ENCODE measurements at regions of chr11 and their contacts with region 1.

Region 1: GRCh38 chr11:83819933-83820549 is 533.9 kb upstream of the CCDC90B start:
- DNase-seq: peak; percentile 48
- H3K4me3 ChIP-seq: no peak overlapping the region
- H3K27ac ChIP-seq: no peak overlapping the region
- H3K4me1 ChIP-seq: no peaks in the 10 kb centered on the region
- H3K27me3 ChIP-seq: no peaks in the 10 kb centered on the region
- CTCF ChIP-seq: peak; percentile 52 to 60

Region 2: DNA sequence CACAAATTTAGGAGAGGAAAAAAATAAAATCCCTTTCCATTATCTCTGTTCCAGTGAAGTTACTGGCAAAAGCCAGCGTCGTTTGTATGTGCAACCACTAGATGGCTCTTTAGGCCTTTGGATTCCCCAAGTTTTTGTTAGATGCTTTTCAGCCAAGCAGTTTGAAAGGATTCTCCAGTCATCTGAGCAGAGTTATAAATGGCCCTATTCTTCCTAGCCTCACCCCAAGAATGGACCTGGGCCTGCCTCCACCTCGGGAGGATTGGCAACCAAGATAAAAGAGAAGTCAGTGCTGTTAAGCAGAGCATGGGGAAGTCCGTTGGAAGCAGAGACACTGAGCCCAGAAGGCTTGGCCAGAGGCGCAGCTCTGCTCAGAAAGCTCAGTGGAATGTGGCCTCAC is 1101.7 kb before region 1 on chr11:
- CTCF ChIA-PET with region 1: no interaction called
- dilution Hi-C with region 1: no loop called
- in situ Hi-C with region 1: loop called (anchors 25 kb)
- intact Hi-C with region 1: loop called (anchors 5 kb)
- DNase-seq: peak; percentile 54
- H3K4me3 ChIP-seq: no peak overlapping the region
- H3K27ac ChIP-seq: no peak overlapping the region
- H3K4me1 ChIP-seq: peaks cover 4% of the 10 kb centered on the region
- H3K27me3 ChIP-seq: no peaks in the 10 kb centered on the region
- CTCF ChIP-seq: peak; percentile 76 to 80

Region 3: DNA sequence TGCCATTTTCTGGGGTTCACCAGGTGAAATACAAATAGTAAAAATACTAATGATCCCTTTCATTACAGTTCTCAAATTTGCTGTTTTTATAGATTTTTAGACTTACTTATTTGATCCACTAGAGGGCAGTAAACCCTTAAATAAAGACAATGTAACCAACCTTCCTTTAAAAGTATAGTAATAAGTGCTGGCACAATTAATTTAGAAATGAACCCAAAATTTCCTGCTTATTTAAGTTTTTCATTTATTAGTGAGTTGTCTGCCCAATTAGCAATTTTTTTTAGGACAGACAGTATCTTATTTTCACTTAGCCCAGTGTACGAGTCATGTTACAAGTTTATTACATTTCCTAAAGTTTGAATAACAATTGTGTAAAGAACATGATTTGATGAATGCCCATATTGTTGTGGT is 913.8 kb before region 1 on chr11:
- CTCF ChIA-PET with region 1: no interaction called
- dilution Hi-C with region 1: no loop called
- in situ Hi-C with region 1: loop called in 1 of 2 experiments (anchors 25 kb)
- intact Hi-C with region 1: loop called (anchors 1 kb)
- DNase-seq: peak; percentile 6
- H3K4me3 ChIP-seq: peak overlapping the region in 1 of 3 experiments; percentile 11
- H3K27ac ChIP-seq: no peak overlapping the region
- H3K4me1 ChIP-seq: peaks cover 6% of the 10 kb centered on the region
- H3K27me3 ChIP-seq: no peaks in the 10 kb centered on the region
- CTCF ChIP-seq: peak; percentile 34 to 53

Region 4: DNA sequence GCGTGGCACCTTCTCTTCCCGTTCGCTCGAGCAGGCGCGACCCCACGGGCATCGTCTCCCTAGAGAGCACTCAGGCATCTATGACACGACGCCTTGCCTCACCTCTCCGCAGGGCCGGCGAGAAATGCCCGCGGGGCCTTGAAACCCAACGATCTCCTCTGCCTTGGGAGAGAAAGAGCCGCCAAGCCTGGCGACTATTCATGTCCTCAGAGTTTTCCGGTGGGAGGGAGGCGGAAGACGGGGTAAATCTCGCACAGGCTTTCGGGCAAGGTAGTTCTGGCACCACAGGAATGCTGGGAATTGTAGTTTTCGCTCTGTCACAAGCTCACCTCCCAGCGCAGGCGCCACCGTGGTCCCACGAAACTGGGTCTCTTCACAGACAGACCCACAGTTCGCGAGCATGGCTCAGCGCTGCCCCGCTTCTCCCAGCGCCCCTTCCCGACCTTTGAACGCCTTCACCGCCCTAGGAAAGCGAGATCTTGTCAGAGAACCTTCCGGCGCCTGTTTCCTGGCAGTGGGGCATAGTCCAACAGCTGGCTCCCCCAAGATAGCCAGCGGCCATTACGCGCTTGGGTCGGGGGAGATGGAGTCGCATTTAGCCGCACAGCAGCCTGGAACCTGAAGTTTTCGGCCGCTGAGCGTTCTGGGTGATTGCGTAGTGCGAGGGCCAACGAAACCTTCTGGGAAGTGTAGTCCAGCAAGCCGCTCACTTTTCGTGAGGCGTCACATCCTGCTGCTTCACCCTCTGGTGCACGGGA is 534.1 kb before region 1 on chr11 and contains the start of gene CCDC90B:
- CTCF ChIA-PET with region 1: no interaction called
- dilution Hi-C with region 1: no loop called
- in situ Hi-C with region 1: loop called in 1 of 2 experiments (anchors 25 kb)
- intact Hi-C with region 1: no loop called
- DNase-seq: peak; percentile 96
- H3K4me3 ChIP-seq: peak within 1 kb of the TSS; percentile 77 to 92 (median 85)
- H3K27ac ChIP-seq: peak within 1 kb of the TSS; percentile 90
- H3K4me1 ChIP-seq: peaks cover 14% of the 10 kb centered on the region
- H3K27me3 ChIP-seq: no peaks in the 10 kb centered on the region
- CTCF ChIP-seq: peak; percentile 23 to 36
- total RNA-seq, gene CCDC90B: 45.3 to 56.3 TPM

Region 5: GRCh38 chr11:83306200-83307080 is 513.6 kb before region 1 on chr11:
- CTCF ChIA-PET with region 1: no interaction called
- dilution Hi-C with region 1: no loop called
- in situ Hi-C with region 1: loop called in 1 of 2 experiments (anchors 25 kb)
- intact Hi-C with region 1: no loop called
- DNase-seq: no peak
- H3K4me3 ChIP-seq: no peak overlapping the region
- H3K27ac ChIP-seq: no peak overlapping the region
- H3K4me1 ChIP-seq: no peaks in the 10 kb centered on the region
- H3K27me3 ChIP-seq: no peaks in the 10 kb centered on the region
- CTCF ChIP-seq: peak in 1 of 2 donors; percentile 8

Region 6: GRCh38 chr11:83724008-83724461 is 96.0 kb before region 1 on chr11:
- CTCF ChIA-PET with region 1: interaction called, 5 read pairs
- dilution Hi-C with region 1: no loop called
- in situ Hi-C with region 1: no loop called
- intact Hi-C with region 1: loop called (anchors 5 kb)
- DNase-seq: peak; percentile 41
- H3K4me3 ChIP-seq: peak overlapping the region; percentile 30 to 55 (median 52)
- H3K27ac ChIP-seq: no peak overlapping the region
- H3K4me1 ChIP-seq: peaks cover 5% of the 10 kb centered on the region
- H3K27me3 ChIP-seq: no peaks in the 10 kb centered on the region
- CTCF ChIP-seq: peak; percentile 38 to 61

Measured in mammary epithelial cell (primary cell).